ENCODE measurements at regions of chr17 and their contacts with region 1.

Region 1: GRCh38 chr17:10631048-10631700 is 25.9 kb downstream of the MYH3 start:
- H3K4me3 ChIP-seq: no peak overlapping the region
- H3K27ac ChIP-seq: no peak overlapping the region
- H3K4me1 ChIP-seq: no peaks in the 10 kb centered on the region
- CTCF ChIP-seq: peak; percentile 49

Region 2: GRCh38 chr17:10661437-10661836 is 30.3 kb after region 1 on chr17:
- CTCF ChIA-PET with region 1: interaction called, 10 read pairs
- POLR2A ChIA-PET with region 1: no interaction called
- H3K4me3 ChIP-seq: no peak overlapping the region
- H3K27ac ChIP-seq: no peak overlapping the region
- H3K4me1 ChIP-seq: no peaks in the 10 kb centered on the region
- CTCF ChIP-seq: no peak

Region 3: DNA sequence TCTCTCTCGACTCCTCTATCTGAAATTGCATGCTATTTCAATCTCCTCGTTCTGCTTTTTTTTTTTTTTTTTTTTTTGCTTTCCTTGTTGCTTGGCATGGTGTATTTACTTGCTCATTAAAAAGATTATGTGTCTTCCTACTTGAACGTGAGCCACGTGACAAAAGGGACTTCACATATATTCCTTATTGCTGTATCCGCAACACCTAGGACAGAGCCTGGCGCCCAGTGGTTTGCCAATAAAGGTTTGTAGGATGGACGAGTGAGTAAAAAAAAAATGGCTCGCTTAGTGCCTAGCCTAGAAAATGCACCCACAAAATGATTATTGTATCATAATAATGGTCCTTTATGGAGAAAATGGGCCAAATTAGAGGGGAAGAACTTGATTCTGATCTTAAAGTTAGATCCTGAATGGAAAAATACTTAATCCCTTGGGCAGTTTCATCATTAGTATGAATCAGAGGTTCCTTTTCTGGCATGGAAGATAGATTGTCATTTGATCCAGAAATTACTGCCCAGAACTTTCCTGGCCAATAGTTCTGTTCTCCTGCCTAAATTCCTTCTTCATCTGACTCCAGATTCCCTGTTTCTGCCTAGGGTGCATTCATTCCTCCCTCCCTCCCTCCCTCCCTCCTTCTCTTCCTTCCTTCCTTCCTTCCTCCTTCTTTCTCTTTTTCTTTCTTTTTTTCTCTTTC is 112.3 kb after region 1 on chr17:
- CTCF ChIA-PET with region 1: no interaction called
- POLR2A ChIA-PET with region 1: no interaction called
- H3K4me3 ChIP-seq: no peak overlapping the region
- H3K27ac ChIP-seq: no peak overlapping the region
- H3K4me1 ChIP-seq: peaks cover 4% of the 10 kb centered on the region; the same call in 1 of the 2 replicates
- CTCF ChIP-seq: no peak

Region 4: DNA sequence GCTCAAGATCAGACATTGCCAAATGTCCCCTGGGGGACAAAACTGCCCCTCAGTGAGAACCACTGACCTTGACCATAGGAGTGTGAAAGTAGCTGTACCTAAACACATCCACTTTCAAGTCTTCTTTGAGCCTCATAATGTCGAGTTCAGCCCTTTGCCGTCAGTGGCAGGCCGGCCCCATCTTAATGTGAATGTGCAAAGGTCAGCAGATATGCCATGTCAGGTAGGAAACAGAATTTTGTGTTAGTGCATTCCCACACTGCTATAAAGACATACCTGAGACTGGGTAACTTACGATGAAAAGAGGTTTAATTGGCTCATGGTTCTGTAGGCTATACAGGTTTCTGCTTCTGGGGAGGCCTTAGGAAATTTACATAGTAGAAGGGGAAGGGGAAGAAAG is 301.8 kb after region 1 on chr17:
- CTCF ChIA-PET with region 1: no interaction called
- POLR2A ChIA-PET with region 1: no interaction called
- H3K4me3 ChIP-seq: no peak overlapping the region
- H3K27ac ChIP-seq: no peak overlapping the region
- H3K4me1 ChIP-seq: no peaks in the 10 kb centered on the region
- CTCF ChIP-seq: no peak